ENCODE measurements at regions of chr9 and their contacts with region 1.

Region 1: GRCh38 chr9:34646211-34647083 is at the start of gene GALT:
- DNase-seq: peak; percentile 99
- H3K4me3 Mint-ChIP-seq: peak within 1 kb of the TSS; percentile 94
- H3K27ac Mint-ChIP-seq: peak within 1 kb of the TSS; percentile 92
- H3K4me1 Mint-ChIP-seq: peaks cover 28% of the 10 kb centered on the region
- H3K27me3 Mint-ChIP-seq: no peaks in the 10 kb centered on the region
- total RNA-seq, gene GALT: 68.9 and 73.4 TPM in 2 replicates

Region 2: DNA sequence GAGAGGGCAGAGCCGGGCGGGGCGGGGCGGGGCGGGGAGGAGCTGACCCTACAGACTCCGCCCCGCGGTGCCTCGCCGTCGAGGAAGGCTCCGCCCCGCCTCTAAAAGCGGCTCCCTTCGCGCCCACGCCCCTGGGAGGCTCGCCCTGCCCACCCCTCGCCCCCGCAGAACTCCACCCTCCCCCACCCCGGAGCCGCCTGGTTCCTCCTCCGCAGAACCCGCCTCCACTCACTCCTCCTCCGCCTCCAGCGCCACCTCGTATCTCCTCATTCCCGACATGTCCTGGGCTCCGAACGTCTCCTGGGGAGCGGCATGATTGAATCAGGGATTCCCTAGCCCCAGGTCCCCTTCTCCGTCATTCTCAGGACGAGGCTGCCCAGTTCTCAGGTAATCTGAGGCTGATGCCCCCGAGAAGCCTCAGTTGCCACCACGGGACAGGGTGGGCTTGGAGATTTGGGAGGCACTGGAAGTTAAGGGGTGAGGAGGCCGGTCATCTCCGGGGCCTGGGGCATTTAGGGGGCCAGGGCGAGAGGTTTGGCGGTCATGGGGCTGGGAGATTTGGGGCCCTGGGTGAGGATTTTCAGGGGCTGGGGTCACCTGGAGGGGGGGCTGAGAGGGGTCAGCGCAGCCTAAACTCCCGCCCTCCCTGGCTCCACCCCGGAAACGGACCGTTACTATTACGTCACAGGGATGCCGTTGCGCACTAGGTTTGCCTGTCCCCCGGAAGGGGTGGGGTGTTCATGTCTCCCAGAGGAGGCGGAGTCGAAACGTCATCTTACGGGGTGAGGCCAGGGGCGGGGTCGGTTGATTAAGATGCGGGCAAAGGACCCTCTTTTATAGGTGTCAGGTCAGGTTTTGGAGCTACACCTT is 19.2 kb after region 1 on chr9:
- intact Hi-C with region 1: loop called (anchors 1 kb)
- DNase-seq: peak; percentile 97
- H3K4me3 Mint-ChIP-seq: peak overlapping the region; percentile 91
- H3K27ac Mint-ChIP-seq: peak overlapping the region; percentile 90
- H3K4me1 Mint-ChIP-seq: peaks cover 45% of the 10 kb centered on the region
- H3K27me3 Mint-ChIP-seq: no peaks in the 10 kb centered on the region

Measured in activated CD4-positive, alpha-beta T cell treated with anti-CD3 and anti-CD28 coated beads, Interleukin-2, amount 10 ng/mL, durations not matched to agents 24 days and 14 days (primary cell).